Activated B cell treated with CpG ODN at 0.5 μM for 24 hours (primary cell): ENCODE measurements at regions of chr19 and their contacts with region 1.

Region 1: DNA sequence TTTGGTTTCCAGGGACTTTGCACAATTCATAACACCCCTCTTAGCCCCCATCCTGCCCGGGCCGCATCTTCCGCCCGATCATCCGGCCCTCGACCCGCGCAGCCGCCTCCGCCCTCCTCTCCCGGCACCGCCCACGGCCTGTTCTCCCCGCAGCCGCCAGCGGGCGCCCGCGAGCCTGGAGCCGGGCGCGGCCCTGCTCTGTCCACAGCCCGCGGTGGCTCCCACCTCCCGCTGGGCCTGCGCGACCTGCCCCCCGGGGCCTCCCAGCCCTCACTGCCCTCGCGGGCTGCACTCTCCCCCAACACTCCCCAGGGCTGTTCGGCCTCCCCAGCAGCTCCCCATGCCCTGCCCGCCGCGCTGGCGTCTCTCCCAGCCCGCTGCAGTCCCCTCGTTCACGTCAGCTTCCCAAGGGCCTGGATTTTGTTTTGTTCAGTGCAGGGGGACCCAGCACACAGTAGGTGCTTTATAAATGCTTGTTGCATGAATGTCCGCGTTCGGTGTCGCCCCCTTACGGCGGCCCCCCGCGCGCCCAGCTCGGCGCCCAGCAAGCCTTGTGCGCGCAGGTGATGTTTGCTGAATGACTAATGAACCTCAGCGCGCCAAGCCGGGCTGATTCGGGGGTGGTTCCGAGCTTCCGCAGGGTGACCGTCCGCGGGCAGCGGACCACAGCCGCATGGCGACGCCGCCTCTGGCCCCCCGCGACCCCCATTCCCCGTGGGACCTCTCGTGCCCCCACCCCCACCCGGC is 4.6 kb upstream of the APC2 start:
- DNase-seq: peak; percentile 85
- ATAC-seq: peak; percentile 91
- H3K4me3 Mint-ChIP-seq: peak overlapping the region; percentile 79
- H3K27ac Mint-ChIP-seq: no peak overlapping the region
- H3K4me1 Mint-ChIP-seq: peaks cover 29% of the 10 kb centered on the region
- H3K27me3 Mint-ChIP-seq: peaks cover 21% of the 10 kb centered on the region
- CTCF ChIP-seq: peak; percentile 51

Region 2: GRCh38 chr19:1417145-1417544 is 28.2 kb before region 1 on chr19:
- CTCF ChIA-PET with region 1: no interaction called
- POLR2A ChIA-PET with region 1: no interaction called
- intact Hi-C with region 1: no loop called
- DNase-seq: no peak
- ATAC-seq: no peak
- H3K4me3 Mint-ChIP-seq: no peak overlapping the region
- H3K27ac Mint-ChIP-seq: peak overlapping the region; percentile 24
- H3K4me1 Mint-ChIP-seq: peaks cover 22% of the 10 kb centered on the region
- H3K27me3 Mint-ChIP-seq: no peaks in the 10 kb centered on the region
- CTCF ChIP-seq: no peak

Region 3: GRCh38 chr19:1455336-1456120 is 10.2 kb after region 1 on chr19:
- CTCF ChIA-PET with region 1: interaction called, 5 read pairs
- POLR2A ChIA-PET with region 1: interaction called, 6 read pairs
- intact Hi-C with region 1: loop called (anchors 1 kb)
- DNase-seq: no peak
- ATAC-seq: peak; percentile 73
- H3K4me3 Mint-ChIP-seq: peak overlapping the region; percentile 46
- H3K27ac Mint-ChIP-seq: no peak overlapping the region
- H3K4me1 Mint-ChIP-seq: peaks cover 23% of the 10 kb centered on the region
- H3K27me3 Mint-ChIP-seq: peaks cover 35% of the 10 kb centered on the region
- CTCF ChIP-seq: no peak

Region 4: GRCh38 chr19:1470203-1471009 is 25.0 kb after region 1 on chr19:
- CTCF ChIA-PET with region 1: interaction called, 6 read pairs
- POLR2A ChIA-PET with region 1: interaction called, 4 read pairs
- intact Hi-C with region 1: loop called (anchors 2 kb)
- DNase-seq: peak; percentile 57
- ATAC-seq: peak; percentile 69
- H3K4me3 Mint-ChIP-seq: peak overlapping the region; percentile 76
- H3K27ac Mint-ChIP-seq: no peak overlapping the region
- H3K4me1 Mint-ChIP-seq: peaks cover 25% of the 10 kb centered on the region
- H3K27me3 Mint-ChIP-seq: peaks cover 2% of the 10 kb centered on the region
- CTCF ChIP-seq: no peak

Region 5: GRCh38 chr19:1632462-1633268 is 187.3 kb after region 1 on chr19:
- CTCF ChIA-PET with region 1: no interaction called
- POLR2A ChIA-PET with region 1: no interaction called
- intact Hi-C with region 1: no loop called
- DNase-seq: no peak
- ATAC-seq: no peak
- H3K4me3 Mint-ChIP-seq: no peak overlapping the region
- H3K27ac Mint-ChIP-seq: no peak overlapping the region
- H3K4me1 Mint-ChIP-seq: no peaks in the 10 kb centered on the region
- H3K27me3 Mint-ChIP-seq: no peaks in the 10 kb centered on the region
- CTCF ChIP-seq: no peak